ENCODE measurements at regions of chr16 and their contacts with region 1.

Region 1: DNA sequence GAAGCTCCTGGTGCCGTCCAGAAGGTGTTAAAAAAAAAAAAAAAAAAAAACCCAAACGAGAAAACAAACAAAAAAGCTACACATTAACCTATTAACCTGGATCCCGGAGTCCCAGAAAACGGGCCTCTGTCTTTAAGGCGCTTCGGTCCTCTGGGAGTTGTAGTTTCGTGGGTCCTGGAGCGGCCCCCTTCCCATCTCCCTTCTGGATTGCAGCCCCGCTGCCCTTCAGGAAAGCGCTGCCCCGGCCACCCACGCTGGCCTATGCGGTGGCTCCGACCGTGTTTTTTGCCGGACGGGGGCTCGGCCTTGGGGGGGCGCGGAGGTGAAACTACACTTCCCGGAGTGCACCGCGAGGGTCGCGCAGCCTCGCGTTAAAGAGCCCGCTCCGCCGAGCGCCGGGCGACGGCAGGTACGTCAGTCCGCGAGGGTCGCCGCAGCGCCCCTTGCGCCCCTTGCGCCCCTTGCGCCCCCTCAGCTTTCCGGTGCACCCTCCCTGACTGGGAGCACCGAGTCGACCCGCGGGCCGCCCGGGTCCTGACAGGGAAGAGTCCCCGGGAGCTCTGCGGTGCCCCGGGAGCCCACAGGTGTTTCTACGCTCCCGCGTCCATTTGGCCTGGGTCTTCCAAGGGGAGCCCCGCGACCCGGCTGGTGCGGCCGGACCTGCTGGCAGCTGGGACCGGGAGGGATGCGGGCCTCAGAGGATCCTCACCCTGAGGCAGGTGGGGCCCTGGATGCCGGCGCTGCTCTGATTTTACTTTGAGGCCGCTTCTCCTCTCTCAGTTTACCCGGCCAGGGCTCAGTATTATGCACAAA is at the start of gene FCSK:
- DNase-seq: peak; percentile 79
- ATAC-seq: peak; percentile 94
- H3K4me3 Mint-ChIP-seq: peak within 1 kb of the TSS; percentile 85
- H3K27ac Mint-ChIP-seq: peak within 1 kb of the TSS; percentile 88
- H3K4me1 Mint-ChIP-seq: peaks cover 16% of the 10 kb centered on the region
- H3K27me3 Mint-ChIP-seq: no peaks in the 10 kb centered on the region
- total RNA-seq, gene FCSK: 10.3 to 13.4 TPM

Region 2: DNA sequence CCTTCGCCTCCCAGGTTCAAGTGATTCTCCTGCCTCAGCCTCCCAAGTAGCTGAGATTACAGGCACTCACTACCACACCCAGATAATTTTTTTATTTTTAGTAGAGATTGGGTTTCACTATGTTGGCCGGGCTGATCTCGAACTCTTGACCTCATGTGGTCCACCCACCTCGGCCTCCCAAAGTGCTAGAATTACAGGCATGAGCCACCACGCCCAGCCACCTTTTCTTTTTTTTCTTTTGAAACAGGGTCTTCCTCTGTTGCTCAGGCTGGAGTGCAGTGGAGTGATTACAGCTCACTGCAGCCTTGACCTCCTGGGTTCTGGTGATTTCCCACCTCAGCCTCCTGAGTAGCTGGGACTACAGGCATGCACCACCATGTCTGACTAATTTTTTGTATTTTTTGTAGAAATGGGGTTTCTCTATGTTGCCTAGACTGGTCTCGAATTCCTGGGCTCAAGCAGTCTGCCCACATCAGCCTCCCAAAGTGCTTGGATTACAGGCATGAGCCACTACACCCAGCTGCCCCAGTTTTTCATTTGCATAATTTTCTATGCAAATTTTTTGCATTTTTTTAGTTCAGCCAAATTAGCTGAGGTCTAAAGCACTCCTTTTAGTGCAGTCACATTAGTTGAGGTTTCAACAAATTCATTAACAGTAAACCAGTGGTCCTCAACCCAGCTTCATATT is 681.0 kb before region 1 on chr16:
- CTCF ChIA-PET with region 1: no interaction called
- POLR2A ChIA-PET with region 1: no interaction called
- intact Hi-C with region 1: no loop called
- DNase-seq: no peak
- ATAC-seq: no peak
- H3K4me3 Mint-ChIP-seq: no peak overlapping the region
- H3K27ac Mint-ChIP-seq: peak overlapping the region; percentile 34
- H3K4me1 Mint-ChIP-seq: peaks cover 42% of the 10 kb centered on the region
- H3K27me3 Mint-ChIP-seq: no peaks in the 10 kb centered on the region

Region 3: DNA sequence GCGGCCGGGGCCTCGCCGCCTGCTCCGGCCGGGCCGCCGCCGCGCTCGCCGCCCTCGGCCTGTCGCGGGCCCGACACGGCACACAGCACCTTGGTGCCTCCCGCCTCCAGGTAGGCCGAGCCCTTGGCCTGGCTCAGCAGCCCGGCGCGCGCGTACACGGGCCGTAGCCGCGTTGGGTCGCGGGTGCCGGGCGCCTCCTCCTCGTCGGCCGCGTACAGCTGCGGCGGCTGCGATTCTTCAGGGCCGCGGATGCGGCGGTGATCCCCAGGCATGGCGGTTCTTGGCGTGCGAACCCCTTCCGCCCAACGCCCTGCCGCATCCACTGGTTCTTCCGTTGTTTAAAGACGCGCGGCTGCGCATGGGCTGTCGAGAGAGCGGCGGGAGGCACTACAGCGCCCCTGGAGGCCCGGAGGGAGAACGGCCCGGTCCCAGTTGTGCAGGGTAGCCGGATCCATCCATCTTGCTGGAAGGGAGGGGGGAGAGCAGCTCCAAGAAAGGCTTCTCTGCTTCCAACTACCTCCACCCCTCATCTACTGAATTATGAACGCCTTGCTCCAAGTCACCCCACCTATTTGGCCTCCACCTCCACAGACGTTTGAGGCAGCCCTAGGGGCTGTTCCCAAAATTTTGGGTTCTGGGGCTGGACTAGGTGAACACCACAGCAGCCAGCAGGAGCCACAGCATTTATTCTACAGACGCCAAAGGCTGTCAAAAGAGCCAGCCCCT is 202.6 kb before region 1 on chr16 and contains the start of gene EXOSC6:
- CTCF ChIA-PET with region 1: no interaction called
- POLR2A ChIA-PET with region 1: interaction called, 3 read pairs
- intact Hi-C with region 1: loop called in 1 of 2 experiments (anchors 1 kb)
- DNase-seq: peak; percentile 96
- ATAC-seq: peak; percentile 94
- H3K4me3 Mint-ChIP-seq: peak within 1 kb of the TSS; percentile 85
- H3K27ac Mint-ChIP-seq: peak within 1 kb of the TSS; percentile 84
- H3K4me1 Mint-ChIP-seq: peaks cover 16% of the 10 kb centered on the region
- H3K27me3 Mint-ChIP-seq: no peaks in the 10 kb centered on the region
- total RNA-seq, gene EXOSC6: 18.7 to 23.5 TPM

Region 4: GRCh38 chr16:70289229-70290098 is 165.0 kb before region 1 on chr16 and contains the start of gene AARS1:
- CTCF ChIA-PET with region 1: no interaction called
- POLR2A ChIA-PET with region 1: no interaction called
- intact Hi-C with region 1: loop called in 1 of 2 experiments (anchors 1 kb)
- DNase-seq: peak; percentile 96
- ATAC-seq: peak; percentile 99
- H3K4me3 Mint-ChIP-seq: peak within 1 kb of the TSS; percentile 92
- H3K27ac Mint-ChIP-seq: peak within 1 kb of the TSS; percentile 96
- H3K4me1 Mint-ChIP-seq: peaks cover 37% of the 10 kb centered on the region
- H3K27me3 Mint-ChIP-seq: no peaks in the 10 kb centered on the region
- total RNA-seq, gene AARS1: 180 to 189 TPM

Region 5: DNA sequence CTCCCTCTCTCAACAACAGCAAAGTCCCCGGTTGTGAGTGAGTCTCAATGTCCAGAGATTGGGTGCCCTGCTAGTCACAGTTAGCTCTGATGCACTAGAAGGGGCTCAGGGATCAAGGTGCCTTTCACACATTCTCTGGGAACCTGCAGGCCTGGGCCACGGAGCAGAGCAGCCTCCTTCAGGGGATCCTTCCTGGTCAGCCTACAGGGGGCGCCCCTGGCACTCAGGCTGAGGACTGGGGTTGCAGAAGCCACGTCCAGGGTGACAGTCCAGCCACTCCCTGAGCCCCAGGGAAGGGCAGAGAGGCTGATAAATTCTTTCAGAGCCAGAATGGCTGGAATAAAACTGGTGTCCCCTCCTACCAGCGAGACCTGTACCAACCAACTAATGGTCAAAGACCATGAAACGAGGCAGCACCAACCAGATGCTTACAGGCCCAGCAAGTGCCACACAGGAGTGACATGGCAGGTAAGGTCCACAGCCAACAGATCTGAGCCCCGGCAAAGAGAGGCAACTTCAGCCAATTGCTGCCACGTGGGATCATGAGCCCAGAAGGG is 59.0 kb before region 1 on chr16:
- CTCF ChIA-PET with region 1: interaction called, 4 read pairs
- POLR2A ChIA-PET with region 1: no interaction called
- intact Hi-C with region 1: loop called in 1 of 2 experiments (anchors 1 kb)
- DNase-seq: peak; percentile 84
- ATAC-seq: peak; percentile 95
- H3K4me3 Mint-ChIP-seq: no peak overlapping the region
- H3K27ac Mint-ChIP-seq: no peak overlapping the region
- H3K4me1 Mint-ChIP-seq: peaks cover 4% of the 10 kb centered on the region
- H3K27me3 Mint-ChIP-seq: no peaks in the 10 kb centered on the region

Region 6: DNA sequence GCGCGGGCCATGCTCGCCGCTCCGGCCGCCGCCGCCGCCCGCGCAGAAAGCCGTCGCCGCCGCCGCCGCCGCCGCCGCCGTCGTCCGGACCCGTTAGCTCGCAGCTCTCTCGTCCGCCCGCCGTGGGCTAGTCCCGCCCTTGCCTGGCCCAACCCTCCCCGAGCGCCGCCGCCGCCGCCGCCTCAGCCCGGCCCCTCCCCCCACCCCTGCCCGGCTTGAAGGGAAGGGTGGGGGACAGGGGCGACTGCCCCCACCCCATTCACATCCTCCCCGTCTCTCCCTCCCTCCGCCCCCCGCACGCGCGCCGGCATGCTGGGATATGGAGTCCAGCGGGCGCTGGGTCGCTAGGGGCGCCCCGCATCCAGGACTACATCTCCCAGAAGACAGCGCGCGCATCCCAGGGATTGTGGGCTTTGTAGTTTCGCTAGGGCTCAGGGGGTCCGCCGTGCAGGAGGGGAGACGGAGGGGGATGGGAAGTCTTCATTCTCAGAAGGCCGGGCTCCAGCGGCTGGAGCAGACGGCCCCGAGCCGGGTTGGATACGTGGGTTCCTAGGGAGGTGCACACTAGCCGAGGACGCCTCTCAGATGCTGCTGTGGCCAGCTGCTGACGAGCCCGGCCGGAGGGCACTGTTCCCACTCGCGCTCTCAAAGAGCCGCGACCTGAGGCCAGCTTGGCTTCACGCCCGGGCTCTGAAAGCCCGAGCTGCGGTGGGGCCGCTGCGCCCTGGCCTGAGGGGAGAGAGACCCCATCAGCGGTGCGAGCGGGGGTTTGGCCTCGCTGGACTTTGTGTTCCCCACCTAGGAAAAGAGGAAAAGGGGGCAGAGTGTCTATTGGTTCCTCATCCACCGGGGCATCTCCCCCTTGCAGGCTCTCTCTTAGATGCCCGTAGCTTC is 15.2 kb before region 1 on chr16 and contains the start of gene ST3GAL2:
- CTCF ChIA-PET with region 1: interaction called, 5 read pairs
- POLR2A ChIA-PET with region 1: interaction called, 4 read pairs
- intact Hi-C with region 1: loop called (anchors 1 kb)
- DNase-seq: peak; percentile 97
- ATAC-seq: peak; percentile 97
- H3K4me3 Mint-ChIP-seq: peak within 1 kb of the TSS; percentile 96
- H3K27ac Mint-ChIP-seq: peak within 1 kb of the TSS; percentile 89
- H3K4me1 Mint-ChIP-seq: peaks cover 33% of the 10 kb centered on the region
- H3K27me3 Mint-ChIP-seq: no peaks in the 10 kb centered on the region
- total RNA-seq, gene ST3GAL2: 14.8 to 16.6 TPM

Region 7: GRCh38 chr16:70540994-70541393 is 86.6 kb after region 1 on chr16:
- CTCF ChIA-PET with region 1: no interaction called
- POLR2A ChIA-PET with region 1: no interaction called
- intact Hi-C with region 1: no loop called
- DNase-seq: no peak
- ATAC-seq: no peak
- H3K4me3 Mint-ChIP-seq: no peak overlapping the region
- H3K27ac Mint-ChIP-seq: no peak overlapping the region
- H3K4me1 Mint-ChIP-seq: peaks cover 8% of the 10 kb centered on the region
- H3K27me3 Mint-ChIP-seq: no peaks in the 10 kb centered on the region

Measured in activated CD4-positive, alpha-beta T cell treated with anti-CD3 and anti-CD28 coated beads for 36 hours (primary cell).